ENCODE measurements at regions of chr18 and their contacts with region 1.

Region 1: GRCh38 chr18:73597832-73598615 is 549.6 kb downstream of the FBXO15 start:
- DNase-seq: no peak
- ATAC-seq: no peak

Region 2: GRCh38 chr18:73617981-73618380 is 20.0 kb after region 1 on chr18:
- intact Hi-C with region 1: loop called (anchors 1 kb)
- DNase-seq: no peak
- ATAC-seq: no peak